ENCODE measurements at regions of chr17 and their contacts with region 1.

Region 1: DNA sequence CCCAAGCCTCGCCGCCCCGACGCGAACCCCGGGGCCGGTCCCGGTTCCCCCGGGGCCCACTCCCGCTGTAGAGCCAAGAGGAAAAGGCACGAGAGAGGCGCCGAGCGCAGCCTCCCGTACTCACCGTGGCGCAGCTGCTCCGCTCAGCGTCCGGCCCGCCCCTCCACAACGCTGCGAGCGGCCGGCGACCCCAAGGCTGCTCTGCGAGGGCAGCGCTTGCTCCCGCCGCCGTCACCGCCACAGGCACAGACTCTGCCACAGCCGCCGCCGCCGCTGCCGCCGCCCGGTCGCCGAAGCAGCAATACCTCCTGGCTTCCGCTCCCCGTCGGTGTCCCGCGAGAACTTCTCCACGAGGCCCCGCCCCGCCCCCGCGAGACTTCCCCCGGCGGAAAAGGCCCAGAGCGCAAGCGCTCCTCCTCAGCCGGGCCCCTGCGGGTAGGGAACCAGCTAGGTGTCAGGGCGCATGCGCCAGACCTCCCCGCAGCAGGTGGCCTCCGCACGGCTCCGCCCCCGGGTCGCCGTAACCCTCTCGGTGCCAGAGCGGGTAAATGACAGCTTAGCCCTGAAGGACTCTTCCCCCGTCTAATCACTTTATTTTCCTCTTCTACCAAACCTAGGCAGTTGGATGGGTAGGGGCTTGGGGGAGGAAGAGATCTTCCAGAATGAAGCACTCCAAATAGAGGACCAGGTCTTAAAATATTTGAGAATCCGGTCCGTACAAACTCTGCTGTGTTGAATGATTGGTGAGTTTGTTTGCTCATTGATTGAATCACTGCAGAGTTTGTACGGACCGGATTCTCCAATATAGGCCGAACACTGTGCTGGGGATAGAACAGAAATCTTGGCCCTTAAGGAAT is at the start of gene GRB2:
- DNase-seq: peak; percentile 100
- ATAC-seq: peak; percentile 81
- H3K4me3 Mint-ChIP-seq: peak within 1 kb of the TSS; percentile 99
- H3K27ac Mint-ChIP-seq: peak within 1 kb of the TSS; percentile 97
- H3K4me1 Mint-ChIP-seq: peaks cover 43% of the 10 kb centered on the region
- H3K27me3 Mint-ChIP-seq: no peaks in the 10 kb centered on the region
- CTCF ChIP-seq: no peak
- total RNA-seq, gene GRB2: 307 and 320 TPM in 2 replicates

Region 2: DNA sequence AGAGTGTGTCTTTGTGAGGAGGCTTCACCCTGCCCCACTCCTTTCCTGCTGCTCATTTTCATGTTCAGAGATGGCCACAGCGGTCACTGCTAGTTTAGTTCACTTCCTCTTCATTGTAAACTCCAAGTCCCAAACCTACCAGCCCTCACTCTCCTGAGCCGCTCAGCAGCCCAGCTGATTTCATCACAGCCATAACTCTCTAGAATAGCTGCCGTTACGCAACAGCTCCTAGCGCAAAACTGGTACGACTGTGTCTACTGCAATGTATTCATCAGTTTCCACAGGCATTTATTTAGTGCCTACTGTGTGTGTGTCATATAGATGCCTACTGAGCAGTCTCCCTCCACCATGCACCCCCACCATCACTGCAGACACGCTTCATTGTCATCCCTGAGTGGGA is 1435.6 kb before region 1 on chr17:
- CTCF ChIA-PET with region 1: no interaction called
- POLR2A ChIA-PET with region 1: no interaction called
- intact Hi-C with region 1: no loop called
- DNase-seq: no peak
- ATAC-seq: no peak
- H3K4me3 Mint-ChIP-seq: no peak overlapping the region
- H3K27ac Mint-ChIP-seq: no peak overlapping the region
- H3K4me1 Mint-ChIP-seq: no peaks in the 10 kb centered on the region
- H3K27me3 Mint-ChIP-seq: peaks cover 22% of the 10 kb centered on the region
- CTCF ChIP-seq: no peak

Region 3: DNA sequence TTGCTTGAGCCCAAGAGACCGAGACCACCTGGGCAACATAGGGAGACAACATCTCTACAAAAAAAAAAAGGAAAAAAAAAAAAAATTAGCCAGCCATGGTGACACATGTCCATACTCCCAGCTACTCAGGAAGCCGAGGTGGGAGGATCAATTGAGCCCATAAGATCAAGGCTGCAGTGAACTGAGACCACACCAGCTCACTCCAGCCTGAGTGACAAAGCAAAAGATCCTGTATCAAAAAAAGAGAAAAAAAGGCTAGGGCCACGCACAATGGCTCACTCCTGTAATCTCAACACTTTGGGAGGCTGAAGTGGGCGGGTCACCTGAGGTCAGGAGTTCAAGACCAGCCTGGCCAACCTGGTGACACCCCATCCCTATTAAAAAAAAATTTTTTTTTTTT is 236.6 kb before region 1 on chr17:
- CTCF ChIA-PET with region 1: no interaction called
- POLR2A ChIA-PET with region 1: no interaction called
- intact Hi-C with region 1: no loop called
- DNase-seq: no peak
- ATAC-seq: no peak
- H3K4me3 Mint-ChIP-seq: no peak overlapping the region
- H3K27ac Mint-ChIP-seq: no peak overlapping the region
- H3K4me1 Mint-ChIP-seq: peaks cover 8% of the 10 kb centered on the region
- H3K27me3 Mint-ChIP-seq: no peaks in the 10 kb centered on the region
- CTCF ChIP-seq: no peak

Region 4: DNA sequence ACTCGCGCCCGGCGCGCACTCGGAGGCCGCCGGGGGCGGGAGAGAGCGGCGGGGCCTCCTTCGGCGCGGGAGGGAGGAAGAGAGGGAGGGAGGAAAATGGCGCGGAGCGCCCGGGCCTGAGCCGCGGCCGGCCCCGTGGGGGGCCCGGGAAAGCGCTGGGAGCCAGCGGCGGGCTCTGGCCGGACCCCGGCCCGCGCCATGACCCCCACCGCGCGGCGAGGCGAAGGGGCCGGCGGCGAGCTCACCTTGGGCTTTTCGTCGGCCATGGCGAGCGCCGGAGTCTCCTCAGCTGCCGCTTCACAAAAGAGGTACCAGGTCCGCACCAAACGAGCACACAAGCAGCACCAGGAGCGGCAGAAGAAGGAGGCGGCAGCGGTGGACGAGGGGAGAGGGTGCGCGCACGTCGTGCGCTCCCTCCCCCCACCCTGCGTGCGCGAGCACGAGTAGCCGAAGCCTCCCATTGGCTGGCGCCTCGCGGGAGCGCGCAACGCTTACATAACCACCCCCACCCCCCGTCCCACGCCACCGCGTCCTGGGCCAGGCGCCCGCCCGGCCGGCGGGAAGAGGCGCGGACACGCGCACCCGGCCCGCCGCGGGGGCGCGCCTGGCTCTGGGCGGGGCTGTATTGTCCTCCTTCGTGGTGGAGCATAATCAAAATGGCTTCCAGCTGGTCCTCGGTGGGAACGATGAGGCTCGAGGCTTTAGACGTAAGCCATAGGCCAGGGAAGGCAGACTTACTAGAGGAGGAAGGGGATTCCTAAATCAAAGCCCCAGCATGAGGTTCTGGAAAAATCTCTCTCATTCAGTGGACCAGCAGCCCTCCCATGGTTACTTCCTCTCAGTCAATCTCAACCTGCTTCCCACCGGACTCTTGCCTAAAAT is 222.8 kb before region 1 on chr17 and contains the start of gene SUMO2:
- CTCF ChIA-PET with region 1: no interaction called
- POLR2A ChIA-PET with region 1: interaction called, 10 read pairs
- intact Hi-C with region 1: loop called (anchors 10 kb)
- DNase-seq: peak; percentile 96
- ATAC-seq: peak; percentile 82
- H3K4me3 Mint-ChIP-seq: peak within 1 kb of the TSS; percentile 86
- H3K27ac Mint-ChIP-seq: peak within 1 kb of the TSS; percentile 97
- H3K4me1 Mint-ChIP-seq: peaks cover 38% of the 10 kb centered on the region
- H3K27me3 Mint-ChIP-seq: no peaks in the 10 kb centered on the region
- CTCF ChIP-seq: no peak
- total RNA-seq, gene SUMO2: 365 and 394 TPM in 2 replicates

Region 5: DNA sequence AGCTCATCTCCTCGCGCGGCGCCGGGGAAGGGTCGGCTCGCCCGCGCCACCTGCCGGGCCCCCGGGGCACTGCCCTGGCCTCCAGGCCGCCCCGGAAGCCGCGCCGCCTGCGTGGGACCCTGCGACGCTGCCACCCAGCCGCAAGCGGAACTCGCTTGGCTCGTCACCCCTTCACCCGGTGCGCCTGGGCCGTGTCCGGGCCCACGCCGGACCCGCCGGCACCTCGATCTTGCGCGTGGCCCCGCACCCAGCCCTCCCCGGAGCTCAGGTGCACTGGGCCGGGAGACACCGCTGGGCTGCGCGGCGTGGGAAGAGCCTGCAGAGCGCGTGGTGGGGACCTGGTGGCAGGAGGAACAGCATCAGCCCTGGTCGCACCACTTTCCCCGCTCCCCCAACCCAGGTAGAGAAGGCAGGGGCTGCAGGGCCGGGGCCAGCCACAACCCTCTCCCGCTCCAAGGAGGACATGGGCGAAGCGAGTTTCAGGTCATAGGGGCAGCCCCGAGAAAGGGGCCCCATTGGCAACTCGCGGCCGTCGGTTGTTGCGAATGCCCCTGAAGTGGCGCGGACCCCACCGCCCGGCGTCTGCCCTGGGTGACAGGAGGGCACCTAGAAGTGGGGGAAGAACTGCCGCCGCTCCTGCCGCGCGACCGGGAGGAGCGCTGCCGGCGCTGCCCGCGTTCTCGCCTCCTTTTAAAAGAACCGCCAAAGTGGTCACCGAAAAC is 134.2 kb before region 1 on chr17:
- CTCF ChIA-PET with region 1: interaction called, 4 read pairs
- POLR2A ChIA-PET with region 1: interaction called, 29 read pairs
- intact Hi-C with region 1: no loop called
- DNase-seq: peak; percentile 95
- ATAC-seq: peak; percentile 91
- H3K4me3 Mint-ChIP-seq: peak overlapping the region; percentile 82
- H3K27ac Mint-ChIP-seq: peak overlapping the region; percentile 76
- H3K4me1 Mint-ChIP-seq: peaks cover 20% of the 10 kb centered on the region
- H3K27me3 Mint-ChIP-seq: no peaks in the 10 kb centered on the region
- CTCF ChIP-seq: no peak

Region 6: DNA sequence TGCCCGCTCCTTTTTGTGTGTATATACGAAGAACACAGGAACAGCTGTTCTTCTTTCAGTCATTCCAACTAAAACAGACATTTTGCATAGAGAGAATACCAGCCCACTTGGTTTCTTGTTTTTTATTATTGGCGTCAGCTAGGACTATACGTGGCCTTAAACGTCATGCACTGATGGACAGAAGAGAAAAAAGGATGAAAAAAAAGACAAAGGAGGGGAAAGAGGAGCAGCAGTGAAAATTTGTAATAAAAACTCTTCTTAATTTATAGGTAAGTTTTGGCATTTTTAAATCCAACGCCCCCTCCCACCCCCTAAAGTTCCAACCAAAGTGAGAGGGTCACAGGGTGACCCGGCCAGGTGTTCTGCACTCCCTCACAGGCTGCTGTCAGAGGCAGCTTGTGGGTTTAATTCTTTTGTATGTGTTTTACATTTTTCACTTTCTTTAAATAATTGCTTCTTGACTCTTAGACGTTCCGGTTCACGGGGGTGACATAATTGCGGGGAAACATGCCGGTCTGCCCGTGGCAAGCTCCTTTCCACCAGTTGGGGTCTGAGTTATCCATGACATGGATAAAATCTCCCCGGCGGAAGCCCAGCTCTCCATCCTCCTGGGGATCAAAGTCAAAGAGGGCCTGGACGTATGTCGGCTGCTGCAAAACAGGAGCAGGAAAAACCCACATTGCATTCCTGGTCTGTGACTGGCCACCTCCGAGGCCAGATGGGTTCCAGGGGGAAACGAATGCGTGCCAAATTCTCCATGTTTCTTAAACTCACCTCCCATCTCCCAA is 85.5 kb before region 1 on chr17:
- CTCF ChIA-PET with region 1: interaction called, 11 read pairs
- POLR2A ChIA-PET with region 1: interaction called, 101 read pairs
- intact Hi-C with region 1: loop called (anchors 1 kb)
- DNase-seq: no peak
- ATAC-seq: peak; percentile 53
- H3K4me3 Mint-ChIP-seq: peak overlapping the region; percentile 70
- H3K27ac Mint-ChIP-seq: peak overlapping the region; percentile 93
- H3K4me1 Mint-ChIP-seq: peaks cover 87% of the 10 kb centered on the region
- H3K27me3 Mint-ChIP-seq: no peaks in the 10 kb centered on the region
- CTCF ChIP-seq: no peak

Region 7: DNA sequence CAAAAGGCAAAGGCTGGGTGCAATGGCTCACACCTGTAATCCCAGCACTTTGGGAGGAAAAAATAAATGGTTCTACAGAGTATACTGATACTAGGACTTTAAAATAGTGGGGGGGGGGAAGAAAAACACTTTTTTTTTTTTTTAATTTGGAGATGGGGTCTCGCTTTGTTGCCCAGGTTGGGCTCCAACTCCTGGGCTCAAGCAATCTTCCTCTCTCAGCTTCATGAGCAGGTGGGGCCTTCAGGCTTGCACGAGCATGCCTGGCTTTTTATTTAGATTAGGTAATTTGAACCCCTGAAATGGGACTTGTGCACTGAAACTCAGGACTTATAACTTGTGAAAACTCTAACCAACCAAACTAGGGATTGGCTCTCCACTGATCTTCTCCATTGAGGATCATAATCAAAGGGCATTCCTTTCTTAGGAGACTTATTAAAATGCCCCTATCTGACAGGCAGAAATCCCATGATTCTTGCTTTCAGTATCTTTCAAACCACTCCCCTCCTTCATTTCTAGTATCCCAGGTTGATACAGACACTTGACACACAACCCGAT is 17.0 kb before region 1 on chr17:
- CTCF ChIA-PET with region 1: interaction called, 6 read pairs
- POLR2A ChIA-PET with region 1: interaction called, 43 read pairs
- intact Hi-C with region 1: loop called (anchors 1 kb)
- DNase-seq: no peak
- ATAC-seq: no peak
- H3K4me3 Mint-ChIP-seq: no peak overlapping the region
- H3K27ac Mint-ChIP-seq: peak overlapping the region; percentile 18
- H3K4me1 Mint-ChIP-seq: peaks cover 78% of the 10 kb centered on the region
- H3K27me3 Mint-ChIP-seq: no peaks in the 10 kb centered on the region
- CTCF ChIP-seq: no peak

Region 8: DNA sequence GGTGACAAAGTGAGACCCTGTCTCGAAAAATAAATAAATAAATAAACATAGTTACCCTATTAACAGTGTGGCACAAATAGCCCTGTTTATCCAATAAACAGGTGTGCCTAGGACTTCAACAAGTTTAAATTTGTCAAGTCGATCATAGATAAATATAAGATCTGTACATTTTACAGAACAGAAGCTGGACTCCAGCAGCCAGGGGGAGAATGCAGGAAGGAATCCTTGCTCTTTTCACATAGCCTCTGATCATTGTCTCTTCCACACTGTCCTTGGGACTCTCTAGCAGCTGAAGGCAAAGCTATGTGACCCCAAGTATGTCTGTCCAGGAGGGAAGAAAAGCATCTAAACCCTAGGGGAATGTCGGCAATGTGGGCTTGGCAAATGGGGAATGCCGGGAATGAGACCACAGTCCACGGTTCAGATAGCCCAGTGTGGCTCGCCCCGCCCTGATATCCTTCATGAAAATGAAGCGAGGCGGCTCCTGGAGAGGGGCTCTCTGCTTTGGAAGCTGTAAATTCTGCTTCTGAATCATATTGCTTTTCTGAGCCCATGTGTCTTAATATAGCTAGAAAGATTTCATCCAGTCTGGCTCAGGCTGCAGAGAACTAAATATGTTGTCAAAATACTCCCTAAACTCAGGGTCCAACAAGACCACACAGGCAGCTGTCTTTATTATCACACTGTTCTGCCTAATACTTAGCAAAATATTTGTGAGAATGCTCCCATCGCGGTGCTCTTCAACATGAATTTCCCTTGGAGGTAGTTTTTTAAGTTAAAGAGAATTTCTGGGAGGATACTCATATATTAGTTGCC is 24.8 kb after region 1 on chr17:
- CTCF ChIA-PET with region 1: no interaction called
- POLR2A ChIA-PET with region 1: no interaction called
- intact Hi-C with region 1: no loop called
- DNase-seq: no peak
- ATAC-seq: no peak
- H3K4me3 Mint-ChIP-seq: no peak overlapping the region
- H3K27ac Mint-ChIP-seq: no peak overlapping the region
- H3K4me1 Mint-ChIP-seq: peaks cover 10% of the 10 kb centered on the region
- H3K27me3 Mint-ChIP-seq: peaks cover 9% of the 10 kb centered on the region
- CTCF ChIP-seq: no peak

Region 9: GRCh38 chr17:75487351-75488070 is 81.9 kb after region 1 on chr17:
- CTCF ChIA-PET with region 1: no interaction called
- POLR2A ChIA-PET with region 1: no interaction called
- intact Hi-C with region 1: no loop called
- DNase-seq: peak; percentile 36
- ATAC-seq: peak; percentile 93
- H3K4me3 Mint-ChIP-seq: peak overlapping the region; percentile 58
- H3K27ac Mint-ChIP-seq: peak overlapping the region; percentile 84
- H3K4me1 Mint-ChIP-seq: peaks cover 27% of the 10 kb centered on the region
- H3K27me3 Mint-ChIP-seq: no peaks in the 10 kb centered on the region
- CTCF ChIP-seq: no peak

Region 10: DNA sequence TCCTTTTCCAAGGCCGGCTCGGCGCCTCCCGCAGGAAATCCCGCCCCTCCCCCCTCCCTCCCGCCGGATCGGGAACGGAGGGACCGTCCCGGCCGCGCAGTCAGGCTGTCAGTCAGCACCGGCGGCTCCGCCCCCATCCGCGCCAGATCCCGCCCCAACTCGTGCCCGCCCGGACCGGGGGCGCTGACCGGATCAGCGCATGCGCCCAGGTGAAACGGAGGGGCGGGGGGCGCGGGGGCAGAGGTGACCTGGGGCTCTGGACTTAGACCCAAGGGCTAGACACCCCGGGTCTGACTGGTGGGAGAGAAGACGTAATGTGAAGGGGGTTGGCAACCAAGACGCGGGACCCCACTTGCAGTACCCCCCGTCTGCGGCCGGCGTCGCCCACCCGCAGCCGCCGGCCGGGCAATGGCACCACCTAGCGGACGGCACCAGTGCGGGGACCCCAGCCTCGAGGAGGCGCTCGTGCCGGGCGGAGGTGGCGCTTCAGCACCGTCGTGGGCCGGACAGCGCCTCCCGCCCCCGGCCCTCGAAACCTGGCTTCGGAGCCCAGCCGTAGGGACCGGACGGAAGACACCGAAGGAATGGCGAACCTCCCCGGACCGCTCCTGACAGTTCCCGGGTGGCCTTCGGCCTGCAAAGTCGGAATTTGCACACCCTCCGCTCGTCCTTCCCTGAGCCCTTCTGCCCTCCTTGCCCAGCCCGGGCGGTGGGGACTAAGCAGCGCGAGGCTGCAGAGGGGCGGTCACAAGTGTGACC is 110.1 kb after region 1 on chr17 and contains the start of gene CASKIN2:
- CTCF ChIA-PET with region 1: no interaction called
- POLR2A ChIA-PET with region 1: no interaction called
- intact Hi-C with region 1: loop called (anchors 2 kb)
- DNase-seq: peak; percentile 80
- ATAC-seq: peak; percentile 68
- H3K4me3 Mint-ChIP-seq: peak within 1 kb of the TSS; percentile 82
- H3K27ac Mint-ChIP-seq: no peak within 1 kb of the TSS
- H3K4me1 Mint-ChIP-seq: peaks cover 22% of the 10 kb centered on the region
- H3K27me3 Mint-ChIP-seq: no peaks in the 10 kb centered on the region
- CTCF ChIP-seq: peak; percentile 43
- total RNA-seq, gene CASKIN2: 1.2 and 1.4 TPM in 2 replicates